WTC11 (cell line): ENCODE measurements at regions of chr15 and their contacts with region 1.

Region 1: GRCh38 chr15:48861813-48862431 is 16.0 kb upstream of the EID1 start:
- DNase-seq: peak; percentile 15
- ATAC-seq: peak; percentile 61
- H3K4me3 Mint-ChIP-seq: no peak overlapping the region
- H3K27ac Mint-ChIP-seq: no peak overlapping the region
- H3K4me1 Mint-ChIP-seq: peaks cover 22% of the 10 kb centered on the region
- H3K27me3 Mint-ChIP-seq: no peaks in the 10 kb centered on the region
- CTCF ChIP-seq: peak; percentile 60

Region 2: GRCh38 chr15:48877630-48878595 is 16.0 kb after region 1 on chr15 and contains the start of gene EID1:
- CTCF ChIA-PET with region 1: interaction called, 25 read pairs
- POLR2A ChIA-PET with region 1: no interaction called
- DNase-seq: peak; percentile 89
- ATAC-seq: peak; percentile 96
- H3K4me3 Mint-ChIP-seq: peak within 1 kb of the TSS; percentile 99
- H3K27ac Mint-ChIP-seq: peak within 1 kb of the TSS; percentile 99
- H3K4me1 Mint-ChIP-seq: peaks cover 27% of the 10 kb centered on the region
- H3K27me3 Mint-ChIP-seq: peaks cover 17% of the 10 kb centered on the region
- CTCF ChIP-seq: no peak
- total RNA-seq, gene EID1: 89.5 to 104 TPM (median 102 TPM) in 3 replicates

Region 3: DNA sequence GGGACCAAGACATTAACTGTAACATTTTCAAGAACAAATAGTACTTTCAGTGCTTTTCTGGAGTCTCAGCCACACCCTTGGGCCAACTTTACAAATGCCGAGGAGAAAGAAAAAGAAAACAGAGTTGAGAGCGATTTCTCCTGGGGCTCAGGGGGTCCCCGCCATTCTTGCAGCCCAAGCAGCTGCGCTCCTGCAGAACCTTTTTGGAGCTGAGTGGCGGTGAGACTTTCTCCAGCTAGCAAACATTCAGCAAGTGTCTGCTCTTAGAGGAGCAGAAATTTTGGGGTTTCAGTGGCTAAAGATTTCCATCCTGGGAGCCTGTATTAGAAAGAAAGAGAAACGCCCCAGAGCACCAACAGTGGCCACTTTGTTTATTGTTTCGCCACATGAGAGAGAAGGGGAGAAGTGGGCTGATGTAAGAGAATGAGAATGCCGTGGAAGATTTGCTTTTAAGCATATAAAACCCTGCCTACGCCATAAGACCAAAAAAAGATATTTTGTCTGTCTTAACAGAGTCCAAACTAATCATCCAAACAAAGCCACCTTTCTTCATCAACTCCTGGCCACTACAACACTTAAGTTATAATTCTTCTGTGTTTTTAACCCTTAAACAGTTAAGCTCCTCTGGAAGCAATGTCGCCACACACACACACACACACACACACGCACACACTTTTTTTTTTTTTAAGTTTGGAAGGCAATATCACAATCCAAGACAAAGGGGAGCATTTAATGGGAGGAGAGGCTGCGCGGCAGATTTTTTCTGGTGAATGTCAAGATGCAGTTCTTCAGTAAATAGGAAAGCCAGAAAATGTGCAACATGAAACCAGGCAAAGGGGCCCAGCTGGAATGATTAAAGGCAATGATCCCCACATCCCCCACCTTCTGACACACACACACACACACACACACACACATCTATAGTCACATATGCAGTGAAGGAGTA is 35.2 kb after region 1 on chr15:
- CTCF ChIA-PET with region 1: no interaction called
- POLR2A ChIA-PET with region 1: no interaction called
- DNase-seq: no peak
- ATAC-seq: peak; percentile 43
- H3K4me3 Mint-ChIP-seq: no peak overlapping the region
- H3K27ac Mint-ChIP-seq: peak overlapping the region; percentile 64; the same call in 1 of the 2 replicates
- H3K4me1 Mint-ChIP-seq: peaks cover 17% of the 10 kb centered on the region
- H3K27me3 Mint-ChIP-seq: no peaks in the 10 kb centered on the region
- CTCF ChIP-seq: no peak

Region 4: DNA sequence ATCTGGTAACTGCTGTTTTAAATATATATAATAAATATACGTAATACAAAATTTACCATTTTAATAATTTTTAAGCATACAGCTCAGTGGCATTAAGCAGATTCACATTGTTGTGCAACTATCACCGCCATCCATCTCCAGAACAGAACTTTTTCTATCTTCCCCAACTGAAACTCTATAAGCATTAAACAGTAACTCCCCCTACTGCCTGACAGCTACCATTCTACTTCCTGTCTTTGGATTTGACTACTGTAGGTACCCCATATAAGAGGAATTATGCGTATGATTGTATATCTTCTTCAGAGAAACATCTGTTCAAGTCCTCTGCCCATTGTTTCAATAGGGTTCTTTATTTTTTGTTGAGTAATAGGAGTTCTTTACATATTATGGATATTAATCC is 52.8 kb after region 1 on chr15:
- CTCF ChIA-PET with region 1: interaction called, 15 read pairs
- POLR2A ChIA-PET with region 1: no interaction called
- DNase-seq: no peak
- ATAC-seq: no peak
- H3K4me3 Mint-ChIP-seq: no peak overlapping the region
- H3K27ac Mint-ChIP-seq: no peak overlapping the region
- H3K4me1 Mint-ChIP-seq: no peaks in the 10 kb centered on the region
- H3K27me3 Mint-ChIP-seq: no peaks in the 10 kb centered on the region; the same call in 1 of the 2 replicates
- CTCF ChIP-seq: no peak

Region 5: GRCh38 chr15:48954538-48954937 is 92.6 kb after region 1 on chr15:
- CTCF ChIA-PET with region 1: interaction called, 11 read pairs
- POLR2A ChIA-PET with region 1: no interaction called
- DNase-seq: peak; percentile 49
- ATAC-seq: peak; percentile 94
- H3K4me3 Mint-ChIP-seq: no peak overlapping the region
- H3K27ac Mint-ChIP-seq: 0 out of 2 replicates have a peak overlapping the region, but pooled peaks have one; percentile 82
- H3K4me1 Mint-ChIP-seq: peaks cover 13% of the 10 kb centered on the region
- H3K27me3 Mint-ChIP-seq: no peaks in the 10 kb centered on the region
- CTCF ChIP-seq: no peak

Region 6: GRCh38 chr15:48963524-48964113 is 101.7 kb after region 1 on chr15 and contains the start of gene SHC4:
- CTCF ChIA-PET with region 1: interaction called, 14 read pairs
- POLR2A ChIA-PET with region 1: interaction called, 4 read pairs
- DNase-seq: peak; percentile 60
- ATAC-seq: peak; percentile 89
- H3K4me3 Mint-ChIP-seq: peak within 1 kb of the TSS; percentile 91
- H3K27ac Mint-ChIP-seq: no peak within 1 kb of the TSS; the same call in 1 of the 2 replicates
- H3K4me1 Mint-ChIP-seq: peaks cover 13% of the 10 kb centered on the region
- H3K27me3 Mint-ChIP-seq: peaks cover 41% of the 10 kb centered on the region
- CTCF ChIP-seq: no peak
- total RNA-seq, gene SHC4: 0.44 to 0.63 TPM (median 0.46 TPM) in 3 replicates

Region 7: GRCh38 chr15:49059491-49059890 is 197.6 kb after region 1 on chr15:
- CTCF ChIA-PET with region 1: no interaction called
- POLR2A ChIA-PET with region 1: no interaction called
- DNase-seq: no peak
- ATAC-seq: no peak
- H3K4me3 Mint-ChIP-seq: no peak overlapping the region
- H3K27ac Mint-ChIP-seq: no peak overlapping the region
- H3K4me1 Mint-ChIP-seq: peaks cover 5% of the 10 kb centered on the region
- H3K27me3 Mint-ChIP-seq: no peaks in the 10 kb centered on the region
- CTCF ChIP-seq: no peak

Region 8: GRCh38 chr15:49101536-49101935 is 239.6 kb after region 1 on chr15:
- CTCF ChIA-PET with region 1: no interaction called
- POLR2A ChIA-PET with region 1: no interaction called
- DNase-seq: no peak
- ATAC-seq: no peak
- H3K4me3 Mint-ChIP-seq: no peak overlapping the region
- H3K27ac Mint-ChIP-seq: no peak overlapping the region
- H3K4me1 Mint-ChIP-seq: no peaks in the 10 kb centered on the region
- H3K27me3 Mint-ChIP-seq: no peaks in the 10 kb centered on the region
- CTCF ChIP-seq: no peak

Region 9: GRCh38 chr15:49225613-49226281 is 363.8 kb after region 1 on chr15:
- CTCF ChIA-PET with region 1: interaction called, 14 read pairs
- POLR2A ChIA-PET with region 1: no interaction called
- DNase-seq: peak; percentile 80
- ATAC-seq: peak; percentile 99
- H3K4me3 Mint-ChIP-seq: no peak overlapping the region
- H3K27ac Mint-ChIP-seq: peak overlapping the region; percentile 4; the same call in 1 of the 2 replicates
- H3K4me1 Mint-ChIP-seq: peaks cover 23% of the 10 kb centered on the region
- H3K27me3 Mint-ChIP-seq: no peaks in the 10 kb centered on the region
- CTCF ChIP-seq: no peak